ENCODE measurements at regions of chr21 and their contacts with region 1.

Region 1: DNA sequence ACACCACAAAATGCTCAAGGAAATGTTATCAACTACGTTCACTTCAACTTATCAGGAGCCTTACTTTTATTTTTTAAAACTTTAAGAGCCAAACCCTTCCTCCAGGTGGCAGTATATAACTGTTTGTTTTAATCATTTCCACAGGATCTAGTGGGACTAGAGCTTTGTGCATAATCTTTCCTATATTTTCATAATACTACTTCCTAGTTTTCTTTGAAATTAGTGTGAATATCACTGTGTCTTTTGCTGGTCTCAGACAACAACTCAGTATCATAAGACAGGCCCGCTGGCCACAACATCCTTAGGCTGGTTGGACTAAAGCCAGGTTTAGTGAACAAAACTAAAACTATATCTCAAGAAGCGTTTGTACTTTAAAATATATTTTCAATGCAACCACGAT is 145.5 kb downstream of the TIAM1 start:
- DNase-seq: no peak
- H3K4me3 Mint-ChIP-seq: no peak overlapping the region
- H3K27ac Mint-ChIP-seq: no peak overlapping the region
- H3K4me1 Mint-ChIP-seq: peaks cover 44% of the 10 kb centered on the region
- H3K27me3 Mint-ChIP-seq: no peaks in the 10 kb centered on the region

Region 2: GRCh38 chr21:31098576-31099005 is 100.0 kb before region 1 on chr21:
- CTCF ChIA-PET with region 1: interaction called, 18 read pairs
- POLR2A ChIA-PET with region 1: no interaction called
- intact Hi-C with region 1: no loop called
- DNase-seq: peak; percentile 83
- H3K4me3 Mint-ChIP-seq: peak overlapping the region; percentile 20
- H3K27ac Mint-ChIP-seq: no peak overlapping the region
- H3K4me1 Mint-ChIP-seq: peaks cover 26% of the 10 kb centered on the region
- H3K27me3 Mint-ChIP-seq: peaks cover 3% of the 10 kb centered on the region

Region 3: GRCh38 chr21:31235671-31236521 is 37.3 kb after region 1 on chr21:
- CTCF ChIA-PET with region 1: no interaction called
- POLR2A ChIA-PET with region 1: no interaction called
- intact Hi-C with region 1: no loop called
- DNase-seq: peak; percentile 22
- H3K4me3 Mint-ChIP-seq: no peak overlapping the region
- H3K27ac Mint-ChIP-seq: no peak overlapping the region
- H3K4me1 Mint-ChIP-seq: peaks cover 16% of the 10 kb centered on the region
- H3K27me3 Mint-ChIP-seq: no peaks in the 10 kb centered on the region

Region 4: DNA sequence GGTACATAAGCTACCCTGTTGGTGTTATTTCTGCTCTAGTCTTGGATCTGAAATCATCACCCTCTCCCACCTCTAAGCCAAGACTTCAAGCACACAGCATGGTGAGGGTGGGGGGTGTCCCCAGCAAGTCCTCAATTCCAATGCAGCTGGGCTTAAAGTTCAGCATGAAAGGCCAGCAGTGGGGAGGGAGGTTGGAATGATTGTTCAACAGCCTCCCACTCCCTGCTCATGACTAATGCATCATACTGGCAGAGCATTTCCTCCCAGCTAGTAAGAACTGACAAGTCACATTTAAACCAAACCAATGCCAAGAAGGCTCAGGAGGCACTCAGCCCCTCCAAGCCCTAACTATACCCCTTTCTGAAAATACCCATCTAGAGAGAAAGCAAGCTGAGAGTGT is 95.4 kb after region 1 on chr21:
- CTCF ChIA-PET with region 1: no interaction called
- POLR2A ChIA-PET with region 1: interaction called, 3 read pairs
- intact Hi-C with region 1: loop called (anchors 1 kb)
- DNase-seq: peak; percentile 84
- H3K4me3 Mint-ChIP-seq: no peak overlapping the region
- H3K27ac Mint-ChIP-seq: peak overlapping the region; percentile 70
- H3K4me1 Mint-ChIP-seq: peaks cover 41% of the 10 kb centered on the region
- H3K27me3 Mint-ChIP-seq: no peaks in the 10 kb centered on the region

Region 5: GRCh38 chr21:31426235-31426797 is 227.7 kb after region 1 on chr21:
- CTCF ChIA-PET with region 1: no interaction called
- POLR2A ChIA-PET with region 1: no interaction called
- intact Hi-C with region 1: loop called (anchors 1 kb)
- DNase-seq: no peak
- H3K4me3 Mint-ChIP-seq: no peak overlapping the region
- H3K27ac Mint-ChIP-seq: peak overlapping the region; percentile 25
- H3K4me1 Mint-ChIP-seq: peaks cover 8% of the 10 kb centered on the region
- H3K27me3 Mint-ChIP-seq: no peaks in the 10 kb centered on the region

Region 6: GRCh38 chr21:31558962-31559367 is 360.4 kb after region 1 on chr21:
- CTCF ChIA-PET with region 1: interaction called, 15 read pairs
- POLR2A ChIA-PET with region 1: interaction called, 3 read pairs
- intact Hi-C with region 1: loop called (anchors 1 kb)
- DNase-seq: peak; percentile 95
- H3K4me3 Mint-ChIP-seq: peak overlapping the region; percentile 85
- H3K27ac Mint-ChIP-seq: no peak overlapping the region
- H3K4me1 Mint-ChIP-seq: peaks cover 30% of the 10 kb centered on the region
- H3K27me3 Mint-ChIP-seq: peaks cover 22% of the 10 kb centered on the region

Region 7: GRCh38 chr21:31604591-31605190 is 406.1 kb after region 1 on chr21:
- CTCF ChIA-PET with region 1: interaction called, 7 read pairs
- POLR2A ChIA-PET with region 1: no interaction called
- intact Hi-C with region 1: loop called (anchors 1 kb)
- DNase-seq: peak; percentile 80
- H3K4me3 Mint-ChIP-seq: no peak overlapping the region
- H3K27ac Mint-ChIP-seq: no peak overlapping the region
- H3K4me1 Mint-ChIP-seq: peaks cover 5% of the 10 kb centered on the region
- H3K27me3 Mint-ChIP-seq: peaks cover 4% of the 10 kb centered on the region

Measured in activated CD4-positive, alpha-beta memory T cell treated with anti-CD3 and anti-CD28 coated beads for 36 hours (primary cell).